H1 (cell line): ENCODE measurements at regions of chr16 and their contacts with region 1.

Region 1: DNA sequence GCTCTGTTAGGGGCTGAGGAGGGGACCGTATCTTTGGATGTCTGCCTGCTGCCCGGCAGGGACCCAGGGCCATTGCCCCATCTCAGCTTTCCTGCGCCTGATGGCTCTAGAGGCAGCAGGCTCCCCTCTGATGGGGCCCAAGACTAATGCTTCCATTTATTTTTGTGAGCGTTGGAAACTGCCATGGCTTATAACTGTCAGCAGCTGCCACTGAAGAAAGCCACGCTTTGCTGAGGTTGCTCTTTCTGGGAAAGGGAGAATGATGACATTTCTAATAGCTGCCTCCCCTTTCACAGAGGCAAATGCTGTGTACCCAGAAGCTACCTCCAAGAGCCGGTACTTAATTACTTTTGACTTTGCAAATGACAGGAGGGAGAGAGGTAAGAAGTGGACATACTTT is 103.8 kb downstream of the HAPSTR1 start:
- DNase-seq: no peak
- H3K4me3 ChIP-seq: no peak overlapping the region
- H3K27ac ChIP-seq: no peak overlapping the region
- H3K4me1 ChIP-seq: no peaks in the 10 kb centered on the region
- H3K27me3 ChIP-seq: no peaks in the 10 kb centered on the region
- CTCF ChIP-seq: no peak
- EP300 ChIP-seq: no peak
- POLR2A ChIP-seq: no peak
- RAD21 ChIP-seq: no peak

Region 2: GRCh38 chr16:9148374-9149015 is 46.8 kb before region 1 on chr16:
- CTCF ChIA-PET with region 1: no interaction called
- POLR2A ChIA-PET with region 1: no interaction called
- DNase-seq: no peak
- H3K4me3 ChIP-seq: no peak overlapping the region
- H3K27ac ChIP-seq: no peak overlapping the region
- H3K4me1 ChIP-seq: peaks cover 7 to 24% (median 14%) of the 10 kb centered on the region in 4 experiments; a peak in 6 of 7 replicates
- H3K27me3 ChIP-seq: no peaks in the 10 kb centered on the region
- CTCF ChIP-seq: no peak
- EP300 ChIP-seq: no peak
- POLR2A ChIP-seq: no peak
- RAD21 ChIP-seq: no peak

Region 3: DNA sequence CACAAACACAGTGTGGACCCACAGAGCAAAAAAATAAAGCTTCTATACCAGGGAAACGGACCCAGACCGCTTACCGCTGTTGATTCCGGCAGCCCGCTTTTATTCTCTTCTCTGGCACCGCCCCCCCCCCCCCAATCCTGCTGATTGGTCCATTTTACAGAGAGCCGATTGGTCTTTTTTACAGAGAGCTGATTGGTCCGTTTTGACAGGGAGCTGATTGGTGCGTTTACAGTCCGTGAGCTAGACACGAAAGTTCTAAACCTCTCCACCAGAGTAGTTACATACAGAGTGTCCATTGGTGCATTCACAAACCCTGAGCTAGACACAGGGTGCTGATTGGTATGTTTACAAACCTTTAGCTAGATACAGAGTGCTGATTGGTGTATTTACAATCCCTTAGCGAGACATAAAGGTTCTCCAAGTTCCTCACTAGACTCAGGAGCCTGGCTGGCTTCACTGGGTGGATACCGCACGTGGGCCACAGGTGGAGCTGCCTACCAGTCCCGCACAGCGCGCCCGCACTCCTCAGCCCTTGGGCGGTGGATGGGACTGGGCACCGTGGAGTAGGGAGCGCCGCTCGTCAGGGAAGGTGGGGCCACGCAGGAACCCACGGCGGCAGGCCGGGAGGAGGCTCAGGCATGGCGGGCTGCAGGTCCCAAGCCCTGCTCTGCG is 11.5 kb before region 1 on chr16:
- CTCF ChIA-PET with region 1: interaction called, 12 read pairs
- POLR2A ChIA-PET with region 1: no interaction called
- DNase-seq: peak in 1 of 2 experiments; percentile 56
- H3K4me3 ChIP-seq: no peak overlapping the region
- H3K27ac ChIP-seq: no peak overlapping the region
- H3K4me1 ChIP-seq: no peaks in the 10 kb centered on the region
- H3K27me3 ChIP-seq: no peaks in the 10 kb centered on the region
- CTCF ChIP-seq: peak in 1 of 3 experiments; percentile 4; a peak in 1 of 4 replicates
- EP300 ChIP-seq: no peak
- POLR2A ChIP-seq: no peak
- RAD21 ChIP-seq: no peak; a peak in 1 of 4 replicates

Region 4: DNA sequence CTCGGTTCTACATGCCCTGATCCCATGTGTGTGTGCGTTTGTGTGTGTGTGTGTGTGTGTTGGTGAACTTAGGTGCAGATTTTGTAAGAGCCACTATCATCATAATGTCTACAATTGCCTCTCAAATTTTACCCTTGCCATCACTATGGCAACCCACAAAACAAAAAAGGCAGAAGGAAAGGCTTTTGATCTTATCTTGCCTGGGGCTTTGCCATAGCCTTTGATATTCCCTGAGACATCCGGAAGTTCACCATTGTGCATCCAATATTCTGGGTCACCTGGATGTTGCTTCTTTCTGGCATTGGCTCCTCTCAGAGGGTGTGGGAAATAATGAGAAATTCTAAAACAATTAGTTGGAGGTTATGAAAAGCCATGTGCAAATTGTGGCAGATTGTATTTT is 10.9 kb after region 1 on chr16:
- CTCF ChIA-PET with region 1: no interaction called
- POLR2A ChIA-PET with region 1: no interaction called
- DNase-seq: no peak
- H3K4me3 ChIP-seq: no peak overlapping the region
- H3K27ac ChIP-seq: no peak overlapping the region
- H3K4me1 ChIP-seq: peaks cover 0 to 4% (median 0%) of the 10 kb centered on the region in 4 experiments; a peak in 1 of 7 replicates
- H3K27me3 ChIP-seq: no peaks in the 10 kb centered on the region
- CTCF ChIP-seq: no peak
- EP300 ChIP-seq: no peak
- POLR2A ChIP-seq: no peak
- RAD21 ChIP-seq: no peak